ENCODE measurements at regions of chr15 and their contacts with region 1.

Region 1: GRCh38 chr15:54347082-54347827 is 369.0 kb downstream of the UNC13C start:
- DNase-seq: peak; percentile 40
- ATAC-seq: peak; percentile 88
- H3K4me3 ChIP-seq: no peak overlapping the region
- H3K27ac ChIP-seq: no peak overlapping the region
- H3K4me1 ChIP-seq: no peaks in the 10 kb centered on the region
- H3K27me3 ChIP-seq: no peaks in the 10 kb centered on the region
- CTCF ChIP-seq: no peak
- EP300 ChIP-seq: peak; percentile 86 to 90
- POLR2A ChIP-seq: no peak
- RAD21 ChIP-seq: peak; percentile 12; the same call in 1 of the 2 replicates

Region 2: DNA sequence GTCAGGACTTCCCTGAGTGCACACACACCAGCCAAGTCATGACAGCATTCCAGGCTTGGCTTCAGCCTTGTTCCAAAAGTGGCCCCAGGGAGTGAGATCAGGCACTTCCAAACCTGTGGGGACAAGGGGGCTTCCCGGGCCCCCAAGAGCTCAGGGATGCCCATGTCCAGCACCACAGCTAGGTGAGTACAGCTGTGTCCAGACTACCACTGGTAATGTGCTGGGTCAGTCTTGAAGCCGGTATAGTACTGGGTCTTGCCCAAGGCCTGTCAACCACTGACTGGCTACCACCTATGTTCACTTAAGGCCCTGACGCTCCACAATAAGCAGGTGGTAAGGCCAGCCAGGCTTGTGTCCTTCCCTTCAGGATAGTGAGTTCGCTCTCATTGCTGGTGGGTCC is 119.7 kb before region 1 on chr15:
- CTCF ChIA-PET with region 1: no interaction called
- POLR2A ChIA-PET with region 1: no interaction called
- RAD21 ChIA-PET with region 1: no interaction called
- SMC1A ChIA-PET with region 1: no interaction called
- in situ Hi-C with region 1: no loop called
- intact Hi-C with region 1: no loop called
- DNase-seq: no peak
- ATAC-seq: no peak
- H3K4me3 ChIP-seq: no peak overlapping the region
- H3K27ac ChIP-seq: no peak overlapping the region
- H3K4me1 ChIP-seq: no peaks in the 10 kb centered on the region
- H3K27me3 ChIP-seq: no peaks in the 10 kb centered on the region
- CTCF ChIP-seq: no peak
- EP300 ChIP-seq: no peak
- POLR2A ChIP-seq: no peak
- RAD21 ChIP-seq: no peak

Region 3: GRCh38 chr15:54298396-54298795 is 48.9 kb before region 1 on chr15:
- CTCF ChIA-PET with region 1: interaction called, 3 read pairs
- POLR2A ChIA-PET with region 1: no interaction called
- RAD21 ChIA-PET with region 1: interaction called, 4 read pairs
- SMC1A ChIA-PET with region 1: interaction called, 11 read pairs
- in situ Hi-C with region 1: no loop called
- intact Hi-C with region 1: no loop called
- DNase-seq: peak; percentile 32
- ATAC-seq: peak; percentile 94
- H3K4me3 ChIP-seq: no peak overlapping the region
- H3K27ac ChIP-seq: no peak overlapping the region
- H3K4me1 ChIP-seq: no peaks in the 10 kb centered on the region
- H3K27me3 ChIP-seq: no peaks in the 10 kb centered on the region
- CTCF ChIP-seq: no peak
- EP300 ChIP-seq: peak; percentile 80 to 88
- POLR2A ChIP-seq: no peak
- RAD21 ChIP-seq: no peak

Region 4: DNA sequence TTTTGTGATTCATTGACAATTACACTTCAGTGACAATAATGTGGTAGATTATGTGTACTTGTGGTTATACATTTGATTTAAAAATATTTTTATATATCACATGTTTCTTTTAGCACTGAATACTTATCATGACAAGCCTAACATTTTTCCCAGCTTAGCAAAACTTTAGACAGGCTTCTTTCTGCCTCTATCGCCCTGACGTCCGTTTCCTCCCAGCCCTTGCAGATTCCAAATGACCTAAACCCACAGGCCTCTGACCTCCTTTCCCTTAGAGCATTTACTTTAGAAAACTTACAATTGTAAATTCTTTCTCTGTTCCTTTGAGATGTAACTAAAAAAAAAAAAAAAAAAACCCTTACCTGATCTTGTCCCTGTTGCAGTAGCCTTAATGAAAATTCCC is 42.9 kb before region 1 on chr15:
- CTCF ChIA-PET with region 1: interaction called, 3 read pairs
- POLR2A ChIA-PET with region 1: interaction called, 6 read pairs
- RAD21 ChIA-PET with region 1: interaction called, 30 read pairs
- SMC1A ChIA-PET with region 1: interaction called, 22 read pairs
- in situ Hi-C with region 1: no loop called
- intact Hi-C with region 1: loop called (anchors 5 kb)
- DNase-seq: no peak
- ATAC-seq: no peak
- H3K4me3 ChIP-seq: no peak overlapping the region
- H3K27ac ChIP-seq: no peak overlapping the region
- H3K4me1 ChIP-seq: no peaks in the 10 kb centered on the region
- H3K27me3 ChIP-seq: no peaks in the 10 kb centered on the region
- CTCF ChIP-seq: no peak
- EP300 ChIP-seq: no peak
- POLR2A ChIP-seq: no peak
- RAD21 ChIP-seq: no peak

Region 5: GRCh38 chr15:54321426-54321825 is 25.8 kb before region 1 on chr15:
- CTCF ChIA-PET with region 1: interaction called, 5 read pairs
- POLR2A ChIA-PET with region 1: interaction called, 3 read pairs
- RAD21 ChIA-PET with region 1: interaction called, 11 read pairs
- SMC1A ChIA-PET with region 1: interaction called, 6 read pairs
- in situ Hi-C with region 1: no loop called
- intact Hi-C with region 1: no loop called
- DNase-seq: no peak
- ATAC-seq: no peak
- H3K4me3 ChIP-seq: no peak overlapping the region
- H3K27ac ChIP-seq: no peak overlapping the region
- H3K4me1 ChIP-seq: no peaks in the 10 kb centered on the region
- H3K27me3 ChIP-seq: no peaks in the 10 kb centered on the region
- CTCF ChIP-seq: no peak
- EP300 ChIP-seq: no peak
- POLR2A ChIP-seq: no peak
- RAD21 ChIP-seq: no peak

Region 6: GRCh38 chr15:54387808-54388207 is 40.6 kb after region 1 on chr15:
- CTCF ChIA-PET with region 1: interaction called, 3 read pairs
- POLR2A ChIA-PET with region 1: no interaction called
- RAD21 ChIA-PET with region 1: interaction called, 3 read pairs
- SMC1A ChIA-PET with region 1: interaction called, 12 read pairs
- in situ Hi-C with region 1: no loop called
- intact Hi-C with region 1: no loop called
- DNase-seq: no peak
- ATAC-seq: peak; percentile 35; the same call in 1 of the 3 replicates
- H3K4me3 ChIP-seq: no peak overlapping the region
- H3K27ac ChIP-seq: no peak overlapping the region
- H3K4me1 ChIP-seq: no peaks in the 10 kb centered on the region
- H3K27me3 ChIP-seq: no peaks in the 10 kb centered on the region
- CTCF ChIP-seq: no peak
- EP300 ChIP-seq: no peak
- POLR2A ChIP-seq: no peak
- RAD21 ChIP-seq: no peak

Region 7: DNA sequence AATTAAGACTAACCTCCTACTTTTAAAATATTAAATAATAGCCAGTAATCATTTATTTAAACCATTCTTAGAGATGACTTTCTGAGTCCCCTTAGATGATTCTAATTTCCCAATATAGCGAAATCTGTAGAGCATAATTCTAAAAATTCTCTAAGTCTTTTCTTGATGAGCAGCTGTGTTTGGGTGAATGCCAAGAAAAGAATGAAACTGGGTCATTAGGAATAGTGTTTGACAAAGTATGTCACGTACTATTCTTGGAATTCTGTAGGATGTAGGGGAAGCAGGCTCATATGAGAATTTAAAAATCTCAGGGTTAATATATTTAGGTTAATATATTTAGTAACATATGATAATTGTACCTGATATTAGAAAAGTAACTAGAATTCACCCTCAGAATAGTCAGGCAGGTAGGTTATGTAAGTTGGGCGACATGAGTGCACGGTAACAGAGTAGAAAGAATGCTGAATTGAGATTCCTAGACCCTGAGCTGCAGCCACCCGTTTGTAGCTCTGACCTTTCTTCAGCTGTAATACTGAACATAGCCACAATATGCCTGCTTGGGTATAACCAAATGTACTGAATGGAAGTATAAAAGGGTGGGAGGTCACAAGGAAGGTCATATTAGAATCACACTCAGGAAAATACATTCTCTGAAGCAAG is 155.3 kb after region 1 on chr15:
- CTCF ChIA-PET with region 1: interaction called, 3 read pairs
- POLR2A ChIA-PET with region 1: interaction called, 3 read pairs
- RAD21 ChIA-PET with region 1: interaction called, 8 read pairs
- SMC1A ChIA-PET with region 1: interaction called, 30 read pairs
- in situ Hi-C with region 1: no loop called
- intact Hi-C with region 1: no loop called
- DNase-seq: no peak
- ATAC-seq: peak; percentile 44
- H3K4me3 ChIP-seq: no peak overlapping the region
- H3K27ac ChIP-seq: no peak overlapping the region
- H3K4me1 ChIP-seq: no peaks in the 10 kb centered on the region
- H3K27me3 ChIP-seq: no peaks in the 10 kb centered on the region
- CTCF ChIP-seq: no peak
- EP300 ChIP-seq: no peak
- POLR2A ChIP-seq: no peak
- RAD21 ChIP-seq: no peak

Measured in GM12878 (cell line).